ENCODE measurements at regions of chrX and their contacts with region 1.

Region 1: DNA sequence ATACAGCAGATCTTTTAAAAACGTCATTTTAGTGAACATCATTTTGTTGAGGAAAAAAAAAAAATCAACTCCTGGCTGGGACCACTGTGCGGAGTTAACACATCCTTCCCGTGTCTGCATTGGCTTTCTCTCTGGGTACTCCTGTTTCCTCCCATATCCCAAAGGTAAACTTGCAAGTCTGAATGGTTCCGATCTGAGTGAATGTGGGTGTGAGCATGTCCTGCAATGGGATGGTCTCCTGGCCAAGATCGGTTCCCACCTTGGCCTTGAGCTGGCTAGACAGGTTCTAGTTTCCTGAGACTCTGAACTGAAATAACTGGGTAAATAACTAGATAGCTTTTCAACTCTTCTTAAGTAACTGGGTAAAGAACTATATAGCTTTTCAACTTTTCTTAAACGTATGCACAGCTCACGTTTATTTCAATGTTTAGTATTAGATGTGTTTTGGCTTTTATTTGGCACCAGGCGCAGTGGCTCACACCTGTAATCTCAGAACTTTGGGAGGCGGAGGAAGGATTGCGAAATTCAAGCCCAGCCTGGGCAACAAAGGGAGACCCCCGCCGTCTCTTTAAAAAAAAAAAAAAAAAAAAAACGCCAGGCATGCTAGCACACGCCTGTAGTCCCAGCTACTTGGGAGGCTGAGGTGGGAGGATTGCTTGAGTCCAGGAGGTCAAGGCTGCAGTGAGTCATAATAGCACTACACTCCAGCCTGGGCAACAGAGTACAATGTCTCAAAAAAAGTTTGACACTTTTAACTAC is 14.0 kb downstream of the RBMX start:
- DNase-seq: no peak
- ATAC-seq: 0 out of 2 replicates have a peak, but pooled peaks have one; percentile 29
- H3K4me3 ChIP-seq: no peak overlapping the region
- H3K27ac ChIP-seq: no peak overlapping the region
- H3K4me1 ChIP-seq: no peaks in the 10 kb centered on the region
- H3K27me3 ChIP-seq: no peaks in the 10 kb centered on the region
- CTCF ChIP-seq: no peak

Region 2: GRCh38 chrX:136920001-136920400 is 53.5 kb after region 1 on chrX:
- CTCF ChIA-PET with region 1: no interaction called
- POLR2A ChIA-PET with region 1: interaction called, 10 read pairs
- in situ Hi-C with region 1: no loop called
- intact Hi-C with region 1: no loop called
- DNase-seq: no peak
- ATAC-seq: no peak
- H3K4me3 ChIP-seq: no peak overlapping the region
- H3K27ac ChIP-seq: no peak overlapping the region
- H3K4me1 ChIP-seq: no peaks in the 10 kb centered on the region
- H3K27me3 ChIP-seq: no peaks in the 10 kb centered on the region
- CTCF ChIP-seq: no peak

Region 3: GRCh38 chrX:136931661-136932060 is 65.1 kb after region 1 on chrX:
- CTCF ChIA-PET with region 1: no interaction called
- POLR2A ChIA-PET with region 1: no interaction called
- in situ Hi-C with region 1: no loop called
- intact Hi-C with region 1: no loop called
- DNase-seq: no peak
- ATAC-seq: no peak
- H3K4me3 ChIP-seq: no peak overlapping the region
- H3K27ac ChIP-seq: no peak overlapping the region
- H3K4me1 ChIP-seq: no peaks in the 10 kb centered on the region
- H3K27me3 ChIP-seq: no peaks in the 10 kb centered on the region
- CTCF ChIP-seq: no peak

Region 4: DNA sequence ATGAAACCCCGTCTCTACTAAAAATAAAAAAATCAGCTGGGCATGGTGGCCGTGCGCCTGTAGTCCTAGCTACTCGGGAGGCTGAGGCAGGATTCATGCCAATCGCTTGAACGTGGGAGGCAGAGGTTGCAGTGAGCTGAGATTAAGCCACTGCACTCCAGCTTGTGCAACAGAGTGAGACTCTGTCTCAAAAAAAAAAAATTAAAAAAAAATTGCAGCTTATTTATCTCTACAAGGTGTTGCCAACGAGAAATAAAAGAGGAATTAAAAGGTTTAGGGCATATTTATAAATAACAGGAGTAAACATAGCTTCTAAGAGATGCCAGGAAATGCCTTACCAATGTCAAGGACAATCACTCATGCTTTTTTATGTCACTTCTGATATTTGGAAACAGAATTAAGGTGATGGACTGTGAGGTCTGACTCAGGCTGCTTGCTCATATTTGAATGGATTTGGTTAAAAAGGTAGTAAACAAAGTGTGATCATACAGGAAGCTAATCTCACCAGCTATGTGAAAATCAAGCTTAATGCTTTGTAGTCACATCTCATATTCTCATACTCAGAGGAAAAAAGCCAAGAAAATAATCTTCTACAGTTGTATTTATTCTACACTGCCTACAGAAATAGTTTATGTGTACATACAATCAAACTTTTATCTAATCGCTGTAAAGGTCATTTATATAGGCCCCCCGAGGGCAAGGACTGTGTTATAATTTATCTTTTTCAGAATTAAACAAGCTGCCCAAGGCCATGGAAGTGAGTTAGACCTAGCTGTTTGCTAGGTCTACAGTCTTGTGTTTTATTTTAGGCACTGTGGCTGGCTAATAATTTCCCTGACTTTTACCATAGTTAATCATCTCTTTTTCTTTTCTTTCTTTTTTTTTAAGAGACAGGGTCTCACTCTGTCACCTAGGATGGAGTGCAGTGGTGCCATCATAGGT is 75.2 kb after region 1 on chrX:
- CTCF ChIA-PET with region 1: no interaction called
- POLR2A ChIA-PET with region 1: no interaction called
- in situ Hi-C with region 1: no loop called
- intact Hi-C with region 1: no loop called
- DNase-seq: no peak
- ATAC-seq: no peak
- H3K4me3 ChIP-seq: no peak overlapping the region
- H3K27ac ChIP-seq: no peak overlapping the region
- H3K4me1 ChIP-seq: no peaks in the 10 kb centered on the region
- H3K27me3 ChIP-seq: no peaks in the 10 kb centered on the region
- CTCF ChIP-seq: no peak

Measured in Panc1 (cell line).